Caco-2 (cell line): ENCODE measurements at regions of chr7 and their contacts with region 1.

Region 1: GRCh38 chr7:69359003-69359700 is 239.1 kb upstream of the AUTS2 start:
- DNase-seq: no peak
- H3K4me3 ChIP-seq: no peak overlapping the region
- H3K4me3 Mint-ChIP-seq: no peak overlapping the region
- H3K27ac Mint-ChIP-seq: no peak overlapping the region
- H3K4me1 ChIP-seq: no peaks in the 10 kb centered on the region
- H3K4me1 Mint-ChIP-seq: no peaks in the 10 kb centered on the region
- H3K27me3 ChIP-seq: no peaks in the 10 kb centered on the region
- H3K27me3 Mint-ChIP-seq: peaks cover 3% of the 10 kb centered on the region
- CTCF ChIP-seq: no peak

Region 2: GRCh38 chr7:69211739-69212138 is 147.4 kb before region 1 on chr7:
- CTCF ChIA-PET with region 1: no interaction called
- POLR2A ChIA-PET with region 1: no interaction called
- intact Hi-C with region 1: no loop called
- DNase-seq: no peak
- H3K4me3 ChIP-seq: no peak overlapping the region
- H3K4me3 Mint-ChIP-seq: no peak overlapping the region
- H3K27ac Mint-ChIP-seq: no peak overlapping the region
- H3K4me1 ChIP-seq: no peaks in the 10 kb centered on the region
- H3K4me1 Mint-ChIP-seq: no peaks in the 10 kb centered on the region
- H3K27me3 ChIP-seq: no peaks in the 10 kb centered on the region
- H3K27me3 Mint-ChIP-seq: peaks cover 3% of the 10 kb centered on the region
- CTCF ChIP-seq: no peak

Region 3: GRCh38 chr7:69301253-69301652 is 57.9 kb before region 1 on chr7:
- CTCF ChIA-PET with region 1: no interaction called
- POLR2A ChIA-PET with region 1: no interaction called
- intact Hi-C with region 1: no loop called
- DNase-seq: no peak
- H3K4me3 ChIP-seq: no peak overlapping the region
- H3K4me3 Mint-ChIP-seq: no peak overlapping the region
- H3K27ac Mint-ChIP-seq: no peak overlapping the region
- H3K4me1 ChIP-seq: no peaks in the 10 kb centered on the region
- H3K4me1 Mint-ChIP-seq: no peaks in the 10 kb centered on the region
- H3K27me3 ChIP-seq: no peaks in the 10 kb centered on the region
- H3K27me3 Mint-ChIP-seq: no peaks in the 10 kb centered on the region
- CTCF ChIP-seq: no peak

Region 4: GRCh38 chr7:69342154-69342884 is 16.8 kb before region 1 on chr7:
- CTCF ChIA-PET with region 1: no interaction called
- POLR2A ChIA-PET with region 1: no interaction called
- intact Hi-C with region 1: no loop called
- DNase-seq: no peak
- H3K4me3 ChIP-seq: no peak overlapping the region
- H3K4me3 Mint-ChIP-seq: no peak overlapping the region
- H3K27ac Mint-ChIP-seq: no peak overlapping the region
- H3K4me1 ChIP-seq: no peaks in the 10 kb centered on the region
- H3K4me1 Mint-ChIP-seq: no peaks in the 10 kb centered on the region
- H3K27me3 ChIP-seq: no peaks in the 10 kb centered on the region
- H3K27me3 Mint-ChIP-seq: no peaks in the 10 kb centered on the region
- CTCF ChIP-seq: no peak

Region 5: DNA sequence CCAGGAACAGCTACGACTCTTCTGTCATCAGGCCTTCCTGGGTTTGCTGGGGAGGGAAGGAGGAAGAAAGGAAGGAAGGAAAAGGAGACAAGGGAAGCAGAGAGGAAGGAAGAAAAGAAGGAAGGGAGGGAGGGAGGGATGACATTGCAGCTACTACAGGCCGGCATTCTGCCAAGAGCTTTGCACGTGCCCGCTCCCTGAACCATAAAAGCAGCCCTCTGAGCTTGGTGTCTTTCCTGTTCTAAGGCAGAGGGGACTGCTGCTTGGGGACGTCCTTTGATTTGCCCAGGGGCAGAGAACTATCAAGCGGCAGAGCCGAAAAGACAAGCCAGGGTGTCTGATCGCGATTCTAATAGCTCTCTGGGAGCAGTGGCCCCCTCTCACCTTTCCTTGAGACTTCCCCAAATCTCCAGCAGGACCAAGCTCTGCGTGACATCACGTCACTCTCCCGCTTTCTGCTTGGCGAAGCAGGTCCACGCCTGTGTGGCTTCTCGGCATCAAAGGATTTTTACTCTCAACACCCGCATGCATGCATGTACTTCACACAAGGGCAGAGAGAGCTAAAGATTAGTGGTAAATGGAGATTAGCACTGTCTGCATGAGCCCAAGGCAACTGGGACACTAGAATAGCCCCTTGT is 71.4 kb after region 1 on chr7:
- CTCF ChIA-PET with region 1: no interaction called
- POLR2A ChIA-PET with region 1: no interaction called
- intact Hi-C with region 1: loop called (anchors 2 kb)
- DNase-seq: no peak
- H3K4me3 ChIP-seq: no peak overlapping the region
- H3K4me3 Mint-ChIP-seq: no peak overlapping the region
- H3K27ac Mint-ChIP-seq: no peak overlapping the region
- H3K4me1 ChIP-seq: no peaks in the 10 kb centered on the region
- H3K4me1 Mint-ChIP-seq: no peaks in the 10 kb centered on the region
- H3K27me3 ChIP-seq: no peaks in the 10 kb centered on the region
- H3K27me3 Mint-ChIP-seq: no peaks in the 10 kb centered on the region
- CTCF ChIP-seq: no peak